HepG2 (cell line): ENCODE measurements at regions of chr4 and their contacts with region 1.

Region 1: DNA sequence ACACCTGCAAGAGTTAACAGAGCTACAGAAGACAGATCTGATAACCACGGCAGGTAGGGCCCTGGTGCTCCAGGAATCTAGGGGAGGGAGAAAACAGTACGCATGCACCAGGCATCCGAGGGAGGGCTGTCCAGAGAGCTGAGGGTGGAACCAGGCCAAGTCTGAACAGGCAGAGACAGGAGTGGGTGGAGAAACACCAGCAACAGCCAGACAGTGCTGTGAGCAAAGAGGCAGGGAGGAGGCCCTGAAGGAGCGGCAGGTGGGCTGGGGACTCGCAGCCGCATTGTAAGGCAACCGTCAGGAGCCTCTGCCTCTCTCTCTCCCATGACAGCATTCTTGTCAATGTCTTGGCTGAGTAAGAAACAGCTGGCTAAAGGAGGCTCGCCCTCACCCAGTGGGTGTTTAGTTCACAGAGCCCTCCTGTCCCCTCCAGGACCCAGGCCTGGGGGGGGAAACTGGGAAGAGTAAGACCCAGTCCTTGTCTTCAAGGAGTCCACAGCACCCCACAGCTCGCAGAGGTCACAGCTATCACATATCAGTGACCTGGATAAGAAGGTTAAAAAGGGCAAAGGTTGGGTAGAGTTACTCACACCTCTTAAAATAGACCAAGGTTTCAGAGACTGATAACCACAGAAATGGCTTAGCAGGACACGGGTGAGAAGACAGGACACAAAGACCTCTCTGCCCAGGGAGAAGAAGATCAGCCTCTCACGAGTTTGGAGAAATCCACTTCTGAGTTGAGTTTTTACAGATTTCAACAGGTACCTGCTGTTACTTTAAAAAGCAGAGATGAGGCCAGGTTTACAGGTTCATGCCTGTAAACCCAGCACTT is 10.5 kb downstream of the ACSL1 start:
- DNase-seq: peak; percentile 74
- ATAC-seq: peak; percentile 90
- H3K4me3 ChIP-seq: peak overlapping the region; percentile 3 to 43 (median 41); a peak in 3 of 6 replicates
- H3K27ac ChIP-seq: no peak overlapping the region
- H3K4me1 ChIP-seq: peaks cover 81% of the 10 kb centered on the region
- H3K27me3 ChIP-seq: no peaks in the 10 kb centered on the region
- CTCF ChIP-seq: no peak
- EP300 ChIP-seq: 0 out of 4 replicates have a peak, but pooled peaks of 1 of the 2 experiments have one; percentile 11
- POLR2A ChIP-seq: no peak
- RAD21 ChIP-seq: no peak

Region 2: GRCh38 chr4:184733654-184734524 is 81.4 kb before region 1 on chr4 and contains the start of gene CENPU:
- CTCF ChIA-PET with region 1: no interaction called
- POLR2A ChIA-PET with region 1: interaction called, 12 read pairs
- in situ Hi-C with region 1: no loop called
- intact Hi-C with region 1: no loop called
- DNase-seq: peak; percentile 97
- ATAC-seq: peak; percentile 94
- H3K4me3 ChIP-seq: peak within 1 kb of the TSS; percentile 73 to 92 (median 88)
- H3K27ac ChIP-seq: peak within 1 kb of the TSS; percentile 80
- H3K4me1 ChIP-seq: peaks cover 51% of the 10 kb centered on the region
- H3K27me3 ChIP-seq: no peaks in the 10 kb centered on the region
- CTCF ChIP-seq: no peak
- EP300 ChIP-seq: peak; percentile 66 to 67; a peak in 2 of 4 replicates
- POLR2A ChIP-seq: peak; percentile 70 to 80
- RAD21 ChIP-seq: peak; percentile 71
- total RNA-seq, gene CENPU: 35.8 and 39.5 TPM in 2 replicates

Region 3: GRCh38 chr4:184825896-184826690 is 10.8 kb after region 1 on chr4 and contains the start of gene ACSL1:
- CTCF ChIA-PET with region 1: no interaction called
- POLR2A ChIA-PET with region 1: interaction called, 10 read pairs
- in situ Hi-C with region 1: no loop called
- intact Hi-C with region 1: no loop called
- DNase-seq: peak; percentile 39
- ATAC-seq: peak; percentile 85
- H3K4me3 ChIP-seq: peak within 1 kb of the TSS; percentile 58 to 81 (median 75)
- H3K27ac ChIP-seq: no peak within 1 kb of the TSS
- H3K4me1 ChIP-seq: peaks cover 40% of the 10 kb centered on the region
- H3K27me3 ChIP-seq: peaks cover 0 to 3% of the 10 kb centered on the region in 2 experiments; a peak in 1 of 5 replicates
- CTCF ChIP-seq: no peak
- EP300 ChIP-seq: no peak
- POLR2A ChIP-seq: peak in 1 of 2 experiments; percentile 54; a peak in 2 of 4 replicates
- RAD21 ChIP-seq: 0 out of 2 replicates have a peak, but pooled peaks have one; percentile 5
- total RNA-seq, gene ACSL1: 29.8 and 38.2 TPM in 2 replicates

Region 4: GRCh38 chr4:184838249-184839074 is 23.2 kb after region 1 on chr4:
- CTCF ChIA-PET with region 1: no interaction called
- POLR2A ChIA-PET with region 1: interaction called, 4 read pairs
- in situ Hi-C with region 1: no loop called
- intact Hi-C with region 1: loop called (anchors 1 kb)
- DNase-seq: peak; percentile 98
- ATAC-seq: peak; percentile 85
- H3K4me3 ChIP-seq: 0 out of 6 replicates have a peak overlapping the region, but pooled peaks of 1 of the 3 experiments have one; percentile 1
- H3K27ac ChIP-seq: peak overlapping the region; percentile 51
- H3K4me1 ChIP-seq: peaks cover 36% of the 10 kb centered on the region
- H3K27me3 ChIP-seq: no peaks in the 10 kb centered on the region; a peak in 1 of 5 replicates
- CTCF ChIP-seq: no peak
- EP300 ChIP-seq: peak; percentile 18 to 87; a peak in 3 of 4 replicates
- POLR2A ChIP-seq: no peak
- RAD21 ChIP-seq: no peak

Region 5: GRCh38 chr4:184924516-184924915 is 109.3 kb after region 1 on chr4:
- CTCF ChIA-PET with region 1: no interaction called
- POLR2A ChIA-PET with region 1: no interaction called
- in situ Hi-C with region 1: no loop called
- intact Hi-C with region 1: no loop called
- DNase-seq: no peak
- ATAC-seq: no peak
- H3K4me3 ChIP-seq: no peak overlapping the region
- H3K27ac ChIP-seq: no peak overlapping the region
- H3K4me1 ChIP-seq: no peaks in the 10 kb centered on the region
- H3K27me3 ChIP-seq: no peaks in the 10 kb centered on the region
- CTCF ChIP-seq: no peak
- EP300 ChIP-seq: no peak
- POLR2A ChIP-seq: no peak
- RAD21 ChIP-seq: no peak